Left cardiac atrium (tissue), 4 donors: ENCODE measurements at regions of chr15 and their contacts with region 1.

Region 1: GRCh38 chr15:34927726-34928125 is 41.8 kb downstream of the AQR start:
- DNase-seq: no peak
- ATAC-seq: no peak

Region 2: DNA sequence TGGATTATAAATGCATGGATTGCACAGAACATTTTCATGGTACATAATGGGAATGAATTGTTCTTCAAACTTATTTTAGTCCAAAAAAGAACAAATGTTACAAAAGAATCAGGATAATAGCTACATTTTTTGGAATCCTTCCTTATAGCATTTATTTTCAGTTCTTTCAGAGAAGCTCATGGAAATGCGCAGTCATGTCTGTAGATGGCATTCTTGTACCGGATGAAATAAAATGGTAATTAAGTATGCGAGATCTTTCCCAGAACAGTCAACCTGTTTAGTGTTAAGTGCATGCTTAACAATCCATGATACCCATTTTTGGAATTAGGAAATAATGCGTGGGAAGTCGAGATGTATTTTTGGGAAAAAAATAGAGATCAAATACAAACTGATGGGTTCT is 306.1 kb before region 1 on chr15:
- intact Hi-C with region 1: loop called (anchors 5 kb)
- DNase-seq: no peak
- ATAC-seq: no peak

Region 3: DNA sequence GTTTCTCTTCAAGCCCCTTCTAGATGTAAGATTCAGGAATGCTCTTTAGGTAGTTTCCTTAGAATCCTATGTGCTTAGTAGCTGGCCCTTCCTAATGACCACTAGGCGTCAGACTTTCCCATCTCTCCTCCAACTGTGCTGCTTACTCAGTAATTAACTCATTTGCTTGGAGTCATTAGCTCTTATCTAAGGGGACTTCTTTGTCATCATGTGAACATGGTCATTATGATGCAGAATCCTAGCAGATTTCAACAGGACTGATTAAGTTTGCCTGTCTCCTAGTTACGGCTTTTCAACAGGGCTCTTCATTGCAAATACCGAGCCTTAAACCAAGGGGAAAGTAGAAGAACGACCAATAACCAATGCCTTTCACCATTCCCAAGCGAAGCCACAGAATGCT is 219.3 kb before region 1 on chr15:
- intact Hi-C with region 1: loop called in 1 of 2 experiments (anchors 10 kb)
- DNase-seq: no peak
- ATAC-seq: peak; percentile 77 to 83